Activated CD4-positive, alpha-beta T cell treated with anti-CD3 and anti-CD28 coated beads for 36 hours (primary cell): ENCODE measurements at regions of chr1 and their contacts with region 1.

Region 1: DNA sequence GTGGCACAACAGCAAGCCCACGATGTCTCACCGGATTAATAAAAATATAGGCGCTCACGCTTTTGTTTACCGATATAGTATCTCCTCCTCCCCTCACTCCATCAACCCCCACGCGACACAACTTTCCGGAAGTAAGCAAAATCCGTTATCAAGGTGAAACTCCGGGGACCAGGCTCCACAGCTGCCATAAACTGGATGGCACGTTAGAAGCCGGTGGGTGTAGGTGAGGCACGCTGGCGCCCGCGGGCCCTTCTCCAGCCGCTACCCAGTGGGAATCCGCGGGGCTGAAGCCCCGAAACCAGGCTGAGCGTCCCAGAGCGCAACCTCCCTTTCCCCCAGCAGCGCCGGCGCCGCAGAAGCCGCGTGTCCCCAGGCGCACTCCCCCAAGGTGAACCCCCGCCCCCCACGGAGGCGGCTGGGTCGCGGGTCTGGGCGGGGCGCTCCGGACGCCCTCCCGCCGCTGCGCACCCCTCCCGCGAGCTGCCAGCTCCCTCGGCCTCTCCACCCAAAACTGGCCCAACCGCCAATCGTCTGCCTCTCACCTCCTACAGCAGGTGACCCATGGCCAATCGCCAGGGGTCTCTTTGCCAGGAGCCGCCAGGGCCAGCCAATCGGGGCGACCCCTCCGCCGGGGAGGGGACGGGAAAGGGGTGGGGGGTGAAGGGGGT is 112.4 kb downstream of the OSBPL9 start:
- DNase-seq: peak; percentile 97
- ATAC-seq: peak; percentile 97
- H3K4me3 Mint-ChIP-seq: peak overlapping the region; percentile 84
- H3K27ac Mint-ChIP-seq: peak overlapping the region; percentile 83
- H3K4me1 Mint-ChIP-seq: peaks cover 40% of the 10 kb centered on the region
- H3K27me3 Mint-ChIP-seq: no peaks in the 10 kb centered on the region

Region 2: GRCh38 chr1:51235673-51236530 is 493.4 kb before region 1 on chr1 and contains the start of gene RNF11:
- CTCF ChIA-PET with region 1: no interaction called
- POLR2A ChIA-PET with region 1: no interaction called
- intact Hi-C with region 1: loop called in 1 of 2 experiments (anchors 2 kb)
- DNase-seq: peak; percentile 97
- ATAC-seq: peak; percentile 93
- H3K4me3 Mint-ChIP-seq: peak within 1 kb of the TSS; percentile 79
- H3K27ac Mint-ChIP-seq: peak within 1 kb of the TSS; percentile 90
- H3K4me1 Mint-ChIP-seq: peaks cover 29% of the 10 kb centered on the region
- H3K27me3 Mint-ChIP-seq: no peaks in the 10 kb centered on the region
- total RNA-seq, gene RNF11: 20.6 to 26.0 TPM

Region 3: DNA sequence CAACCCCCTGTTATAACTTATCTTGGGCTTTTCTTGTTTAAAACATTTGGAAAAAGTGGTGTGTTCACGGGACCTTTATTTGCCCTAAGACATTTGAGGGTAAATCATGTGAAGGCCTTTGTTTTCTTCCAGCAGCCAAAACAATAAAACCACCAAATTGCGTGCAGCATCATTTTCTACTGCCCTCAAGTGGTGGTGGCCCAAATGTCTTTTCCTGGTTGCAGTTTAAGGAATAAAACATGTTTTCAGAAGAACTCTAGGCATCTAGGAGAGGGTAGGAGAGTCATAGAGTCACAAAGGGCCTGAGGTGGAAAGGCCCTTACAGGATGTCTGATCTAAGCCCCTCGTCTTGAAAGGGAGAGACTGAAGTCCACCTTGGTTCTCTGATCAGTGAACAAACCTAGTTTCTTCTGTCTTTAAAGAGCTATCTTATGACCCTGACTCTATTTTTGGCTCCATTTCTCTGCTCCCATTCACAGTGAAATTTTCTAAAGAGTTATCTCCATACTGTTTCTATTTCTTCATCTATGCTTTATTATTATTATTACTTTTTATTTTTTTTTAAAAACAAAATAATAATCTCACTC is 194.2 kb before region 1 on chr1:
- CTCF ChIA-PET with region 1: no interaction called
- POLR2A ChIA-PET with region 1: no interaction called
- intact Hi-C with region 1: no loop called
- DNase-seq: peak; percentile 53
- ATAC-seq: peak; percentile 19
- H3K4me3 Mint-ChIP-seq: no peak overlapping the region
- H3K27ac Mint-ChIP-seq: peak overlapping the region; percentile 32
- H3K4me1 Mint-ChIP-seq: peaks cover 9% of the 10 kb centered on the region
- H3K27me3 Mint-ChIP-seq: no peaks in the 10 kb centered on the region

Region 4: GRCh38 chr1:51616901-51617708 is 112.2 kb before region 1 on chr1 and contains the start of gene OSBPL9:
- CTCF ChIA-PET with region 1: interaction called, 3 read pairs
- POLR2A ChIA-PET with region 1: interaction called, 3 read pairs
- intact Hi-C with region 1: loop called (anchors 1 to 2 kb)
- DNase-seq: peak; percentile 95
- ATAC-seq: peak; percentile 95
- H3K4me3 Mint-ChIP-seq: peak within 1 kb of the TSS; percentile 100
- H3K27ac Mint-ChIP-seq: peak within 1 kb of the TSS; percentile 96
- H3K4me1 Mint-ChIP-seq: peaks cover 33% of the 10 kb centered on the region
- H3K27me3 Mint-ChIP-seq: no peaks in the 10 kb centered on the region
- total RNA-seq, gene OSBPL9: 46.2 to 64.5 TPM

Region 5: DNA sequence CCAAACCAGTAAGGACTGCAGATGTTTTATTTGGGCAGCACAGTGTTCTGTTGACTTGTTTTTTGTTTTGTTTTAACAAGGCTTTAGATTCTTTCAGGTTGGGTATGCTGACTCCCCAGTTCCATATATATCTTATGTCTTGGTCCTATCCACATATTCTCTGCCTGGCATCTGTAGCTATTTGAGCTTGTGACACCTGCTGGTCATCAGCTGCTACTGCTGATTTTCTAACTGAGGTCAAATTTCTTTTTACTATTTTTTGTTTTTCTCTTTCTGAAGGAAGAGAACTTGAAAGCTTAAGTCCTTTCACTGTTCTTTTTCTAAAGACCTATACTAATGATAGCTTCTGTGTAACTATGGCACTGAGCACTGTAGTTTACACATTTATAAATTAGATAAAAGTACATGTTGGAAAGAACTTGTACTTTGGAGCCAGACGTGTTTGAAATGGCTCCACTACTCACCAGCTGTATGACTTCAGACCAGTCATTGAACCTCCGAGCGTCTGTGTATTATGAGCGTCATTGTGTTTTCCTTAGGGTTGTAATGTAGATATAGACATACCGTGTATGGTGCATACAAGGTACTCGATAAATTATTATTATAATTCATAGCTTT is 39.8 kb after region 1 on chr1:
- CTCF ChIA-PET with region 1: interaction called, 13 read pairs
- POLR2A ChIA-PET with region 1: no interaction called
- intact Hi-C with region 1: no loop called
- DNase-seq: peak; percentile 30
- ATAC-seq: peak; percentile 57
- H3K4me3 Mint-ChIP-seq: no peak overlapping the region
- H3K27ac Mint-ChIP-seq: no peak overlapping the region
- H3K4me1 Mint-ChIP-seq: peaks cover 12% of the 10 kb centered on the region
- H3K27me3 Mint-ChIP-seq: no peaks in the 10 kb centered on the region